Caco-2 (cell line): ENCODE measurements at regions of chr5 and their contacts with region 1.

Region 1: DNA sequence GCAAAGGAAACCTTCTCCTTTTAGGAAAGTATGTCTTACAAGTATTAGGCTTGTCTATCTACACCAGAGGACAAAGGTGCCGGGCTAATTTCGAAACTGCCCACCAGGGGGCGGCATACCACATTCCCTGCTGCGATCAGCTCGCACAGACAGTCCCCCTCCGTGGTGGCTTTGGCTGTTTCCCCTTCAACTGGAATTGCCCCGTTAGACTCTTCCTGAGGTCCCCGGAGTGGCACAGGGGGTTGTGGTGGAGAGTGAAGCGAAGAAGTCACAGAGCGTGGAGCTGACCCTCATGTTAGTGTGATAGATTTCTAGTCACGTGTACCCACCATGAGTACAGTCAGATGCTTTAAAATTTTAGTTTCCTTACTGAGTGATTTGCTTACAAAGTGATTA is 17.5 kb downstream of the PTTG1 start:
- DNase-seq: peak; percentile 84 to 90
- H3K4me3 ChIP-seq: peak overlapping the region; percentile 23
- H3K4me3 Mint-ChIP-seq: peak overlapping the region; percentile 66
- H3K27ac Mint-ChIP-seq: no peak overlapping the region
- H3K4me1 ChIP-seq: no peaks in the 10 kb centered on the region; the same call in 1 of the 2 replicates
- H3K4me1 Mint-ChIP-seq: peaks cover 6% of the 10 kb centered on the region
- H3K27me3 ChIP-seq: no peaks in the 10 kb centered on the region
- H3K27me3 Mint-ChIP-seq: no peaks in the 10 kb centered on the region
- CTCF ChIP-seq: peak; percentile 89 to 91

Region 2: GRCh38 chr5:160418561-160419457 is 20.4 kb before region 1 on chr5 and contains the start of gene SLU7:
- CTCF ChIA-PET with region 1: interaction called, 12 read pairs
- POLR2A ChIA-PET with region 1: interaction called, 3 read pairs
- intact Hi-C with region 1: no loop called
- DNase-seq: peak; percentile 95 to 96
- H3K4me3 ChIP-seq: peak within 1 kb of the TSS; percentile 99
- H3K4me3 Mint-ChIP-seq: peak within 1 kb of the TSS; percentile 92
- H3K27ac Mint-ChIP-seq: peak within 1 kb of the TSS; percentile 95
- H3K4me1 ChIP-seq: peaks cover 13% of the 10 kb centered on the region; the same call in 1 of the 2 replicates
- H3K4me1 Mint-ChIP-seq: peaks cover 34% of the 10 kb centered on the region
- H3K27me3 ChIP-seq: no peaks in the 10 kb centered on the region
- H3K27me3 Mint-ChIP-seq: no peaks in the 10 kb centered on the region
- CTCF ChIP-seq: no peak
- total RNA-seq, gene SLU7: 53.1 and 55.0 TPM in 2 replicates

Region 3: GRCh38 chr5:160467555-160468362 is 28.6 kb after region 1 on chr5:
- CTCF ChIA-PET with region 1: interaction called, 38 read pairs
- POLR2A ChIA-PET with region 1: no interaction called
- intact Hi-C with region 1: loop called (anchors 1 kb)
- DNase-seq: peak; percentile 70
- H3K4me3 ChIP-seq: peak overlapping the region; percentile 30
- H3K4me3 Mint-ChIP-seq: peak overlapping the region; percentile 72
- H3K27ac Mint-ChIP-seq: peak overlapping the region; percentile 67
- H3K4me1 ChIP-seq: peaks cover 43% of the 10 kb centered on the region
- H3K4me1 Mint-ChIP-seq: peaks cover 30% of the 10 kb centered on the region
- H3K27me3 ChIP-seq: no peaks in the 10 kb centered on the region
- H3K27me3 Mint-ChIP-seq: no peaks in the 10 kb centered on the region
- CTCF ChIP-seq: no peak

Region 4: DNA sequence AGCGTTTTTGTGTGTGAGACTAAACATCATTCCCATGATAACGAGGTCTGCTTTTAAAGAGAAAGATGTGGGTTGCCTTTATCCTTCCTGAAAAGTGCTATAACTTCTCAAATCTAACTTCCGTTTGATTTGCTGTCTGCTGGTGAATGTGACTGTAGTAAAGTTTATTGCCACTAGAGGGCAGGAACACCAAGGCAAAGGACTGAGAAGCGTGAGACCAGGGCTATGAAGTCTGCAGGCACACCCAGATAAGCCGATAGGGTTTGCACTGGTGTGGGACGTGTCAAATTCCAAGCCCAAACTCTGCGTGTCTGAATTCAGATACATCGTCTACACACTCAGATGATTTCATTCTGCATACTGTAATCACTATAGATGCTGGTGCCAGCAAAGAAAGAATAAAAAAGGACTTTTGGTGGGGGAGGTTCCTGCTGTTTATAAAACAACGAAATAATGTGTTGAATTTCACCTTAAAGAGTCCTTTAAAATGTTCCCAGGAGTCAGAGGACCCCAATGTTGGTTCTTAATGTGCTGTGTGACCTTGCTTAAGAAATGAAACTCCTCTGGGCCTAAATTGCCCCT is 69.7 kb after region 1 on chr5:
- CTCF ChIA-PET with region 1: interaction called, 26 read pairs
- POLR2A ChIA-PET with region 1: no interaction called
- intact Hi-C with region 1: loop called (anchors 1 kb)
- DNase-seq: peak; percentile 75 to 82
- H3K4me3 ChIP-seq: no peak overlapping the region
- H3K4me3 Mint-ChIP-seq: no peak overlapping the region
- H3K27ac Mint-ChIP-seq: no peak overlapping the region
- H3K4me1 ChIP-seq: no peaks in the 10 kb centered on the region
- H3K4me1 Mint-ChIP-seq: no peaks in the 10 kb centered on the region
- H3K27me3 ChIP-seq: no peaks in the 10 kb centered on the region
- H3K27me3 Mint-ChIP-seq: peaks cover 3% of the 10 kb centered on the region
- CTCF ChIP-seq: peak; percentile 78 to 90

Region 5: DNA sequence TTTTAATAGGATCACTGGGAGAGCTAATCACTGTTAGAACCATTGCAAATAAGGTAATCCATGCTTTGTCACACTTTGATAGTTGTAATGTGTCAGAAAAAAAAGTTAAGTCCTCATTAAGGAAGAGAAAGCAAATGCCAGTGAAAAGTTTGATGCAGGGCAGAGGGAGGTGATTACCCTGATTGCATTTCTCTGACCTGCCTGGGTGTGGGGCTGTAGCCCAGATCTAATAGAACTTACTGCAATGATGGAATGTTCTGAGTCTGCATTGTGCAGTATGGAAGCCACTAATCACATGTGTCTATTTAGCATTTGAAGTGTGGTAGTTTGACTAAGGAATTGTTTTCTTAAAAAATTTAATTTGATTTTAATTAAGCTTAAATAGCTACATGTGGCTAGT is 210.1 kb after region 1 on chr5:
- CTCF ChIA-PET with region 1: no interaction called
- POLR2A ChIA-PET with region 1: no interaction called
- intact Hi-C with region 1: loop called (anchors 1 kb)
- DNase-seq: peak in 1 of 2 experiments; percentile 23
- H3K4me3 ChIP-seq: no peak overlapping the region
- H3K4me3 Mint-ChIP-seq: no peak overlapping the region
- H3K27ac Mint-ChIP-seq: no peak overlapping the region
- H3K4me1 ChIP-seq: no peaks in the 10 kb centered on the region
- H3K4me1 Mint-ChIP-seq: no peaks in the 10 kb centered on the region
- H3K27me3 ChIP-seq: no peaks in the 10 kb centered on the region; the same call in 1 of the 2 replicates
- H3K27me3 Mint-ChIP-seq: peaks cover 4% of the 10 kb centered on the region
- CTCF ChIP-seq: peak in 1 of 2 experiments; percentile 30

Region 6: DNA sequence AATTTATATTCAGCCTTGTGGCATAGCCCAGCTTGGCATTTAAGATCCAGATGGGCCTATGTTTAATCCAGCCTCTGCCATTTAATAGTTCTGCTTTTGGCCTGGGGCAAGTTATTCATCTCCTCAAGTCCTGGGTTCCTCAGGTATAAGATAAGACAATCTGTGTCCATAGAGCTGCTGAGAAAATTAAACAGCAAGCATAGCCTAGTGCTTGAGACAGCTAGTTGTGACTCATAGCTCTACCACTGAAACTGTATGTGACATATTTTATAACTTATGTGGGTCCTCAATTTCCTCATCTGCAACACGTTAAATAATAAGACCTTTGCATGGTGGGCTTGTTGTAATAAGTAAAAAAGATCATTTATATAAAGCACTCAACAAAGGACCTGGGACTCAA is 466.1 kb after region 1 on chr5:
- CTCF ChIA-PET with region 1: no interaction called
- POLR2A ChIA-PET with region 1: no interaction called
- intact Hi-C with region 1: loop called (anchors 10 kb)
- DNase-seq: no peak
- H3K4me3 ChIP-seq: no peak overlapping the region
- H3K4me3 Mint-ChIP-seq: no peak overlapping the region
- H3K27ac Mint-ChIP-seq: no peak overlapping the region
- H3K4me1 ChIP-seq: peaks cover 60% of the 10 kb centered on the region
- H3K4me1 Mint-ChIP-seq: peaks cover 52% of the 10 kb centered on the region
- H3K27me3 ChIP-seq: no peaks in the 10 kb centered on the region
- H3K27me3 Mint-ChIP-seq: no peaks in the 10 kb centered on the region
- CTCF ChIP-seq: no peak